Activated naive CD4-positive, alpha-beta T cell treated with anti-CD3 and anti-CD28 coated beads for 36 hours (primary cell): ENCODE measurements at regions of chr2 and their contacts with region 1.

Region 1: GRCh38 chr2:37635504-37636380 is 35.7 kb downstream of the CDC42EP3 start:
- DNase-seq: peak; percentile 85
- H3K4me3 Mint-ChIP-seq: no peak overlapping the region
- H3K27ac Mint-ChIP-seq: peak overlapping the region; percentile 90
- H3K4me1 Mint-ChIP-seq: peaks cover 49% of the 10 kb centered on the region
- H3K27me3 Mint-ChIP-seq: no peaks in the 10 kb centered on the region

Region 2: GRCh38 chr2:36966370-36967235 is 669.1 kb before region 1 on chr2 and contains the start of gene STRN:
- CTCF ChIA-PET with region 1: no interaction called
- intact Hi-C with region 1: loop called (anchors 10 kb)
- DNase-seq: peak; percentile 96
- H3K4me3 Mint-ChIP-seq: peak within 1 kb of the TSS; percentile 94
- H3K27ac Mint-ChIP-seq: peak within 1 kb of the TSS; percentile 90
- H3K4me1 Mint-ChIP-seq: peaks cover 33% of the 10 kb centered on the region
- H3K27me3 Mint-ChIP-seq: no peaks in the 10 kb centered on the region
- total RNA-seq, gene STRN: 19.3 to 22.2 TPM

Region 3: DNA sequence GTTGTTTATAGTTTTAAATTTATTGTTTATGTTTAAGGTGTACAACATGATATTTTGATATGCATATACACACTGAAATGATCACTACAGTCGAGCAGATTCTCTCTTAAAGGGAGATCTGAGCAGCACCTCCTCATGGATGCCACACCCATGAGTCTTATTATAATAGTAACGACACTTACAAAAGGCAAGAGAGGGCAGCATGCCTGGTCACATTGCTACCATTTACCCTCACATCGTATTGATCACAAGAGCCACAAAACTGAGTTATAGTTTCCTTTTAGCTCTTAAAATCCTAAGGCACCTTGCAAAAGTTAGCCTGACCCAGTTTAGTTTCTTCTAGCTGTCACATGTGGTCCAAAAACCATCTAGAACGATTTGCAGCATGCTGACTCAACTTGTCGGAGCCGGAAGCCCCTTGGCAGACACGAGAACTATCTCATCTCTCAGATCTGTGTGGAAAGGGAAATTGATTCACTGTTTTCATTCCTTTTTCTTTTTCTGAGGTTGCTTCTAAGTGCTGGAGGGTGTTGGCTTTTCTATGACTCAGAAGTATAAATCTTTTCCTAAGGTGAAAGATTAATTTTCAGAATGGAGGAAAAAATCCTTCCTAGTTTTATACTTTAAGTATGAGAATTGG is 49.6 kb before region 1 on chr2:
- CTCF ChIA-PET with region 1: no interaction called
- intact Hi-C with region 1: loop called (anchors 1 kb)
- DNase-seq: peak; percentile 85
- H3K4me3 Mint-ChIP-seq: peak overlapping the region; percentile 25
- H3K27ac Mint-ChIP-seq: peak overlapping the region; percentile 67
- H3K4me1 Mint-ChIP-seq: peaks cover 76% of the 10 kb centered on the region
- H3K27me3 Mint-ChIP-seq: no peaks in the 10 kb centered on the region

Region 4: DNA sequence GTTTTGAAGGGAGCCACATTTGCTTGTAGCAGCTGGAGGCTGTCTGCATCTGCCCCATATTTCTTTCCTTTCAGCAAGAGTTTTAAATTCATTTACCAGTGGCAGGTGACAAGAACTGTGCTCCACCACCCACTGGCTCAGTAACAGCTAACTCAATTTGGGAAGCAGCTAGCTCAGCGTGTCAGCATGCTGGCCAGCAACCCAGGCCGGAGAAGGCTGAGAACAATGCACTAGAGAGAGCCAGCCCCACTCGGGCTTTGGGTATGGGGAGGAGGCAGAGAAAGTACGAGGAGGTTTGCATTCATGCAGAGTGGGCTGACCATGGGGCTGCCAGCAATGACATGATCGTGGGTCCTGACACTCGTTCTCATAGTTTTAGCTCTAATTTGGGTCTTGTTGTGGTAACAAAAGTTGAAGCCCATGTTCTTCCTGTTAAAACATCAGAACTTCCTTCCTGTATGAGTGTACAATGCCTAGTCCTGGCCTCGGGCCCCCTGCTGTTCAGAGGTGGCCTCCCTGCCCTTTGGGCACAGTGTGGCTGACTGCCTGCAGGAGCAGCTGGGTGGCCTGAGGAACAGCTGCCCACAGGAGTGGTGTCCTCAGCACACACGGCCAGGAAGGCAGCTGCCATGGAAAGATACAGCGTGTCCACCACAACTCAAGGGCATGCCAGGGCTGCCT is 12.7 kb after region 1 on chr2:
- CTCF ChIA-PET with region 1: interaction called, 3 read pairs
- intact Hi-C with region 1: loop called (anchors 1 kb)
- DNase-seq: peak; percentile 60
- H3K4me3 Mint-ChIP-seq: peak overlapping the region; percentile 25
- H3K27ac Mint-ChIP-seq: peak overlapping the region; percentile 78
- H3K4me1 Mint-ChIP-seq: peaks cover 67% of the 10 kb centered on the region
- H3K27me3 Mint-ChIP-seq: no peaks in the 10 kb centered on the region

Region 5: GRCh38 chr2:37672104-37672869 is 36.5 kb after region 1 on chr2:
- CTCF ChIA-PET with region 1: no interaction called
- intact Hi-C with region 1: loop called (anchors 1 kb)
- DNase-seq: peak; percentile 71
- H3K4me3 Mint-ChIP-seq: peak overlapping the region; percentile 75
- H3K27ac Mint-ChIP-seq: peak overlapping the region; percentile 63
- H3K4me1 Mint-ChIP-seq: peaks cover 40% of the 10 kb centered on the region
- H3K27me3 Mint-ChIP-seq: no peaks in the 10 kb centered on the region

Region 6: GRCh38 chr2:37832590-37833197 is 197.0 kb after region 1 on chr2:
- CTCF ChIA-PET with region 1: no interaction called
- intact Hi-C with region 1: loop called (anchors 2 kb)
- DNase-seq: peak; percentile 92
- H3K4me3 Mint-ChIP-seq: no peak overlapping the region
- H3K27ac Mint-ChIP-seq: no peak overlapping the region
- H3K4me1 Mint-ChIP-seq: peaks cover 13% of the 10 kb centered on the region
- H3K27me3 Mint-ChIP-seq: no peaks in the 10 kb centered on the region

Region 7: DNA sequence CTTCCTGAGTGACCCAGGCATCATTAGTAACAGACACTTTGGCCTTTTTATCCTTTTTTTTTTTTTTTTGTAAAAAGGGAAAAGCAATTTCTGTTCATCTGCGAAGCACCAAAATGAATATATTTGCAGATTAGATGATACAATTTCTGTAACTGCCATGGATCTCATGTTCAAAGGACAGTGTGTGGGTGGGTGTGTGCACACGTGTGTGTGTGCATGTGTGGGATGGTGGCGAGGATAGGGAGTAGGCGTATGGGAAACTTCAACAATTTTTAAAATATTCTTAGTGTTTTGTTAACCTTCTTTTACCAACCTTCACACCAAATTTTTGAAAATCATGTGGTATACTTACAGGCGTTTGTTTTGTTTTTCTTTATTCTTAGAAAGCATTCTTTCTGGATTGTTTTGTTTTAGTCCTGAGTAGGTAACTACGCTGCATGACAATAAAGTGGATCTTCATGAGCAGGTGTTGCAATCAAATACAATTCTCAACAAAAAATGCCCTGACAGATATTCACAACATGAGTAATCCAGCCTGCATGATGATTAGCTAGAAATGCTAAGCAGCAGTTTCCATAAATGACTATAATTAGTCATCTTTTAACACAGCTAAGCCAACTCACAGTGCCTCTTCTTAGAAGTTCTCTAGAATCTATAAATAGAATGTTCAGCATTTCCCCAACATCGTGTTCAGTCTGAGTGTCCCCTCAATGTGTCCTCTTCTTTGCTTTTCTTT is 235.9 kb after region 1 on chr2:
- CTCF ChIA-PET with region 1: interaction called, 3 read pairs
- intact Hi-C with region 1: loop called (anchors 1 kb)
- DNase-seq: no peak
- H3K4me3 Mint-ChIP-seq: peak overlapping the region; percentile 25
- H3K27ac Mint-ChIP-seq: peak overlapping the region; percentile 86
- H3K4me1 Mint-ChIP-seq: peaks cover 30% of the 10 kb centered on the region
- H3K27me3 Mint-ChIP-seq: peaks cover 12% of the 10 kb centered on the region